Activated CD4-positive, alpha-beta T cell treated with anti-CD3 and anti-CD28 coated beads for 36 hours (primary cell): ENCODE measurements at regions of chr6 and their contacts with region 1.

Region 1: GRCh38 chr6:140921366-140922226 is 1211.1 kb upstream of the GJE1 start:
- DNase-seq: peak; percentile 10
- ATAC-seq: peak; percentile 93
- H3K4me3 Mint-ChIP-seq: no peak overlapping the region
- H3K27ac Mint-ChIP-seq: no peak overlapping the region
- H3K4me1 Mint-ChIP-seq: no peaks in the 10 kb centered on the region
- H3K27me3 Mint-ChIP-seq: no peaks in the 10 kb centered on the region

Region 2: GRCh38 chr6:139369568-139370282 is 1551.9 kb before region 1 on chr6:
- CTCF ChIA-PET with region 1: no interaction called
- POLR2A ChIA-PET with region 1: no interaction called
- intact Hi-C with region 1: loop called (anchors 2 to 10 kb)
- DNase-seq: peak; percentile 32
- ATAC-seq: no peak
- H3K4me3 Mint-ChIP-seq: peak overlapping the region; percentile 12
- H3K27ac Mint-ChIP-seq: peak overlapping the region; percentile 49
- H3K4me1 Mint-ChIP-seq: peaks cover 37% of the 10 kb centered on the region
- H3K27me3 Mint-ChIP-seq: no peaks in the 10 kb centered on the region

Region 3: DNA sequence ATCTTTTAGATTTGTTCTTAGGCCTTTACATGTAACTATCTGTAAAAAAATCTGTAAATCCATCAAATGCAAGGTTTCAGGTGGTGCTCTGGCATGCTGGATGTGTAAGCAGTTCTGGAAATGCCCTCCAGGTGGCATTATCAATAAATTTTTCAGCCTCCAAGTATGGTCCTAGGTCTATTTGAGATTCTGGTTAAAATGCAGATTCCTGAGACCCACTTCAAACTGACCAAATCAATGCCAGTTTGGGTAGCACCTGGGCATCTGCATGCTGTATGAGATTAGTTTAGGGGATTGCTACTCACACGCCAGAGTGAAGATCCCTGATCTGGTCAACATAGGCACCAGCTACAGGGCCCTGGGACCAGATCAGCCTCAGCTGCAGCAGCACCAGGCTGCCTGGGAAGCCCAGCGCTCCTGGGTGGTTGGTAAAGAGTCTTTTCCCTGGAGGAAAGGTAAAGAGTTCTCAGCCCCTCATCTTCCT is 1039.8 kb before region 1 on chr6:
- CTCF ChIA-PET with region 1: no interaction called
- POLR2A ChIA-PET with region 1: no interaction called
- intact Hi-C with region 1: loop called in 1 of 2 experiments (anchors 5 kb)
- DNase-seq: peak; percentile 33
- ATAC-seq: peak; percentile 61
- H3K4me3 Mint-ChIP-seq: no peak overlapping the region
- H3K27ac Mint-ChIP-seq: no peak overlapping the region
- H3K4me1 Mint-ChIP-seq: peaks cover 2% of the 10 kb centered on the region
- H3K27me3 Mint-ChIP-seq: peaks cover 2% of the 10 kb centered on the region